Right ventricle myocardium inferior (tissue), 1 donor: ENCODE measurements at regions of chr22 and their contacts with region 1.

Region 1: GRCh38 chr22:41940832-41941765 is 5.9 kb downstream of the CENPM start:
- DNase-seq: peak; percentile 84
- ATAC-seq: peak; percentile 92

Region 2: GRCh38 chr22:41697126-41697775 is 243.8 kb before region 1 on chr22:
- intact Hi-C with region 1: loop called (anchors 1 kb)
- DNase-seq: peak; percentile 96
- ATAC-seq: peak; percentile 74

Region 3: GRCh38 chr22:41746567-41747400 is 194.3 kb before region 1 on chr22:
- intact Hi-C with region 1: loop called (anchors 2 kb)
- DNase-seq: peak; percentile 75
- ATAC-seq: peak; percentile 90

Region 4: DNA sequence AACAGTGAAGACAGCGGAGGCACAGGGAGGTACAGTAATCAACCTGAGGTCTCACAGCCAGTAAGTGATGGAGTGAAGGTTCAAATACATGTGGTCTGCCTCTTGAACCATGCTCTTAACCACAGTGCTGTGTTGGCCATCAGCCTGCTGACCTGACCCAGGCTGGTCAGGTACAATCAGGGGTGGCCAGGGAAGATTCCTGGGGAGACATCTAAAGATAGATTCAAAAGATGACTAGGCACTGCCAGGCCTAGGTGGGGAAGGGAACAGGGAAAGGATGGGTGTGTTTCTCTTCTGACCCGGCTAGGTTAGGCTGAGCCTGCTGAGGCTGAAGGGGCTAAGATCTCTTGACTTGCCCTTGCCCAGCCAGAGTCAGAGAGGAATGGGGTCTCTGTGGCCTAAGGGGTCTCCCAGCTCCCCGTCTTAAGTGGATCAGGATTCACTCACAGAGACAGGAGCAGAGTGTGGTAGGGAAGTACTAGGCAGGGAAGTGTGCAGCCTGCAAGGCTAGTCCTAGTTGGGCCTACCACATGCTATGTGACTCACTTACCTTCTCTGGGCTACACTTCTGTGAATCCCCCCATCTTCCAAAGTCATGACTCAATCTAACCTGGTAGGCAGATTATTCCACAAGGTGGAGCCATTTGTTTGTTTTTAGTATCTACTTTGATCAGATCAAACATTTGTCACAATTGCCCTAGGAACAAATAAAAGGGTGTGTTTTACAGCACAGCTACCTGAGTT is 118.6 kb before region 1 on chr22:
- intact Hi-C with region 1: loop called (anchors 1 kb)
- DNase-seq: no peak
- ATAC-seq: peak; percentile 16

Region 5: GRCh38 chr22:42151924-42152635 is 211.0 kb after region 1 on chr22:
- intact Hi-C with region 1: no loop called
- DNase-seq: no peak
- ATAC-seq: no peak